ENCODE measurements at regions of chr17 and their contacts with region 1.

Region 1: GRCh38 chr17:36591434-36592315 is at the start of gene DHRS11:
- DNase-seq: peak; percentile 84 to 90
- ATAC-seq: peak; percentile 94 to 99 (median 95)
- H3K4me3 ChIP-seq: peak within 1 kb of the TSS; percentile 59 to 98 (median 91)
- H3K27ac ChIP-seq: peak within 1 kb of the TSS in 9 of 10 donors; percentile 72 to 86 (median 80)
- H3K4me1 ChIP-seq: peaks cover 0 to 33% (median 20%) of the 10 kb centered on the region in 9 donors
- H3K27me3 ChIP-seq: no peaks in the 10 kb centered on the region
- CTCF ChIP-seq: peak in 3 of 9 donors; percentile 6 to 36 (median 29)
- total RNA-seq, gene DHRS11: 11.0 to 24.7 (median 18.9) TPM

Region 2: DNA sequence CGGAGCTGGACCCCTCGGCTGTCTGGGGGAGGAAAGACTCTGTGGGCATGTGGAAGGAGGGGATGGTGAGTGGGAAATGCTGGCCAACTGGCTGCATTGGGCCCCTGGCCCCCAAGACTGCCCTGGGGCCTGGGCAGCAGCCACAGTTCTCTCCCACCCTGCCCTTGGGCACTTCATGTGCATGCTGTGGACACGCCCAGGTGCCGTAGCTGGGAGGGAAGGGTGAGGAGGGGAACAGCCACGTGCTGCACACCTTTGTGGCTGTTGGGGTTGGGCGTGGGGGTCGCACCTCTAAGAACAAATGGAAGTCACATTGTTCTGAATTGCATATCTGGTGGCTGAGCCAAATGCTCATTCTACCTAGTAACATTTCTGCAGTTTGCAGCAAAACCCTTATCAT is 117.1 kb before region 1 on chr17:
- intact Hi-C with region 1: no loop called
- DNase-seq: no peak
- ATAC-seq: peak in 1 of 8 donors; percentile 41
- H3K4me3 ChIP-seq: no peak overlapping the region
- H3K27ac ChIP-seq: no peak overlapping the region
- H3K4me1 ChIP-seq: no peaks in the 10 kb centered on the region
- H3K27me3 ChIP-seq: peaks cover 0 to 54% (median 22%) of the 10 kb centered on the region in 7 donors
- CTCF ChIP-seq: no peak

Region 3: DNA sequence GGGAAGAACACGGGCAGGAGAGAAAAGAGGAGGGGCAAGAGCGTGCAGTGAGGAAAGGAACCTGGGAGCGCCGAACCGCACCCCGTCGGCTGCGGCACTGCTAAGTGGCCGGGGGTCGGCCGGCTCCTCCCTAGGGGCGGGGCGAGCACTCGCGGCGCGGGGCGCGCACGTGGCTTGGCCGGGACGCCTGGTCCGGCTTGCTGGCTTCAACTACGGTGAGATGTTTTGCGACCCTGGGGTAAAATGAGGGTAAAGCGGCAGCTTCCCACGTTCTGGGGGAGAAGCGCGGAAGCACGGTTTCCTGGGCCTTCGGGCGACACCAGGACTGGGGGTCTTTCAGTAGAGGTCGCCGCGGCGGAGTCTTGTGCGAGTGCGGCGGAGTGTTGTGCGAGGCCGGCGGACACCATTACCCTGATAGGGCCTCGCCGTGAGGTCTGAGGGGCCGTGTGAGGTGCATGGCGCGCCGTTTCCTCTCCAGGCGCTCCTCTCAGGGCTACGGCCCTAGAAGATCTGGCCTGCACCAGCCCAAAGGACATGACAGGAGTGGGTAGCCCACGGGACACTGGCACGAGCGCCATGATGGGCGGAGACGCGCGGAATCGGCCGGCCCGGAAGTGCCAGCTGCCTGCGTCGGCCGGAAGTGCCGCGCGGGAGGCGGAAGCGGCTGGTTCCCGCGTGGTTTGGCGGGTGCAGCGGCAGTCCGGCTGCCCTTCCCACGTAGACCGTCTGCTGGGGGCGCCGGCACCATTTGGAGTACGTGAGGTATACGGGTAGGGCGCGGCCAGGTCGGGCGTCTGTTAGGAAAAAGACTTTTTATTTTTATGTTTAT is 56.6 kb before region 1 on chr17 and contains the starts of genes MYO19 and PIGW:
- intact Hi-C with region 1: loop called in 4 of 10 experiments (anchors 2 to 10 kb)
- DNase-seq: peak; percentile 86 to 90
- ATAC-seq: peak; percentile 92 to 96 (median 94)
- H3K4me3 ChIP-seq: peak within 1 kb of the TSS; percentile 55 to 89 (median 78)
- H3K27ac ChIP-seq: peak within 1 kb of the TSS; percentile 86 to 99 (median 96)
- H3K4me1 ChIP-seq: peaks cover 0 to 24% (median 15%) of the 10 kb centered on the region in 9 donors
- H3K27me3 ChIP-seq: no peaks in the 10 kb centered on the region
- CTCF ChIP-seq: peak in 3 of 9 donors; percentile 30 to 40 (median 34)
- total RNA-seq, gene MYO19: 8.8 to 22.9 (median 13.9) TPM
- total RNA-seq, gene PIGW: 4.0 to 10.2 (median 6.5) TPM

Region 4: GRCh38 chr17:36545465-36546417 is 45.9 kb before region 1 on chr17:
- intact Hi-C with region 1: loop called in 6 of 10 experiments (anchors 5 to 10 kb)
- DNase-seq: peak; percentile 96 to 97
- ATAC-seq: peak; percentile 89 to 95 (median 92)
- H3K4me3 ChIP-seq: peak overlapping the region; percentile 69 to 98 (median 86)
- H3K27ac ChIP-seq: peak overlapping the region; percentile 97 to 100 (median 100)
- H3K4me1 ChIP-seq: peaks cover 16 to 56% (median 49%) of the 10 kb centered on the region in 9 donors
- H3K27me3 ChIP-seq: no peaks in the 10 kb centered on the region
- CTCF ChIP-seq: no peak

Region 5: DNA sequence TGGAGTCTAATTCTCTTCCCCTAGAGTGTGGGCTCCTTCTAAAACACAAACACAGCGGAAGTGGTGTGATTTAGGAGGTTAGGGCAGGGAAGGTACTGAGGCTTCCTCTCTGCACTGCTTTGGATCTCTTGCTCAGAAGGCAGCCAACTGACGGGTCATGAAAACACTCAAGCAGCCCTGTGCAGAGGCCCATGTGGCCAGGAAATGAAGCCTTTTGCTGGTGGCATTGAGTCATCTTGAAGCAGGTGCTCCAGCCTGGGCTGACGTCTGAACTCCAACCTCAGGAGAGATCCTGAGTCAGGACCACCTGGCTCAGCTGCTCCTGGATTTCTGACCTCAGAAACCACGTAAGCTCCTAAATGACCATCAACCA is 82.6 kb after region 1 on chr17:
- intact Hi-C with region 1: no loop called
- DNase-seq: no peak
- ATAC-seq: no peak
- H3K4me3 ChIP-seq: no peak overlapping the region
- H3K27ac ChIP-seq: no peak overlapping the region
- H3K4me1 ChIP-seq: no peaks in the 10 kb centered on the region
- H3K27me3 ChIP-seq: peaks cover 0 to 24% (median 5%) of the 10 kb centered on the region in 7 donors
- CTCF ChIP-seq: no peak

Region 6: DNA sequence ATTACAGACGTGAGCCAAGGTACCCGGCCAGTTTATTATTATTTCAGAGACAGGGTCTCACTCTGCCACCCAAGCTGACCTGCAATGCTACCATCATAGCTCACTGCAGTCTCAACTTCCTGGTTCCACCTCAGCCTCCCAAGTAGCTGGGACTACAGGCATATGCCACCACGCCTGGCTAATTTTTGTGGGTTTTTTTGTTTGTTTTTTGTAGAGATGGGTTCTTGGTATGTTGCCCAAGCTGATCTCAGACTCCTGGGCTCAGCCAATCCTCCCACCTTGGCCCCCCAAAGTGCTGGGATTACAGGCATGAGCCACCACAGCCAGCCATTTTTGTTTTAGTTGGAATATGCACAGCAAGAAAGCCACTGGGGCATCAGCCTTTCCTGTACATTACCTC is 125.4 kb after region 1 on chr17:
- intact Hi-C with region 1: no loop called
- DNase-seq: no peak
- ATAC-seq: no peak
- H3K4me3 ChIP-seq: no peak overlapping the region
- H3K27ac ChIP-seq: no peak overlapping the region
- H3K4me1 ChIP-seq: peaks cover 0 to 8% (median 0%) of the 10 kb centered on the region in 9 donors
- H3K27me3 ChIP-seq: peaks cover 0 to 43% (median 25%) of the 10 kb centered on the region in 7 donors
- CTCF ChIP-seq: no peak

Region 7: DNA sequence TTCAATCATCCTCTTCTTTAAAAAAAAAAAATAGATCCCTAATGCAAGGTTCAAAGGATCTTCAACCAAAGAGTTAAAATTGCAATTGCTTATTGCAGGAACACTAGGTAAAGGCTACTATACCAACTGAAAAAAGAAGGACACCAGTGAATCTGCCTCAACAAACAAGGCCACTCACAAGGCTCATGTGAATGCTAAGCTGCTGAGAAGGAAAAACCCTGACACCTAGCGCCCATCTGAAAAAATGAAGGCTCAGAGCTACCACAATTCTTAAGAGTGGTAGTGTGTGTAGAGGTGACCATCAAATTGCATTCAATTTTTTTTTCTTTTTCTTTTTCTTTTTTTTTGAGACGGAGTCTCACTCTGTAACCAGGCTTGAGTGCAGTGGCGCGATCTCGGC is 582.5 kb after region 1 on chr17:
- intact Hi-C with region 1: no loop called
- DNase-seq: no peak
- ATAC-seq: no peak
- H3K4me3 ChIP-seq: no peak overlapping the region
- H3K27ac ChIP-seq: no peak overlapping the region
- H3K4me1 ChIP-seq: no peaks in the 10 kb centered on the region
- H3K27me3 ChIP-seq: no peaks in the 10 kb centered on the region
- CTCF ChIP-seq: peak in 3 of 9 donors; percentile 17 to 34 (median 19)